ENCODE measurements at regions of chr5 and their contacts with region 1.

Region 1: GRCh38 chr5:140362860-140363630 is 3.1 kb downstream of the SLC4A9 start:
- DNase-seq: peak; percentile 73 to 78
- ATAC-seq: peak; percentile 46 to 81 (median 70)
- H3K4me3 ChIP-seq: peak overlapping the region in 7 of 10 donors; percentile 10 to 40 (median 31)
- H3K27ac ChIP-seq: no peak overlapping the region
- H3K4me1 ChIP-seq: peaks cover 0 to 13% (median 6%) of the 10 kb centered on the region in 9 donors
- H3K27me3 ChIP-seq: no peaks in the 10 kb centered on the region
- CTCF ChIP-seq: peak; percentile 89 to 98 (median 94)

Region 2: DNA sequence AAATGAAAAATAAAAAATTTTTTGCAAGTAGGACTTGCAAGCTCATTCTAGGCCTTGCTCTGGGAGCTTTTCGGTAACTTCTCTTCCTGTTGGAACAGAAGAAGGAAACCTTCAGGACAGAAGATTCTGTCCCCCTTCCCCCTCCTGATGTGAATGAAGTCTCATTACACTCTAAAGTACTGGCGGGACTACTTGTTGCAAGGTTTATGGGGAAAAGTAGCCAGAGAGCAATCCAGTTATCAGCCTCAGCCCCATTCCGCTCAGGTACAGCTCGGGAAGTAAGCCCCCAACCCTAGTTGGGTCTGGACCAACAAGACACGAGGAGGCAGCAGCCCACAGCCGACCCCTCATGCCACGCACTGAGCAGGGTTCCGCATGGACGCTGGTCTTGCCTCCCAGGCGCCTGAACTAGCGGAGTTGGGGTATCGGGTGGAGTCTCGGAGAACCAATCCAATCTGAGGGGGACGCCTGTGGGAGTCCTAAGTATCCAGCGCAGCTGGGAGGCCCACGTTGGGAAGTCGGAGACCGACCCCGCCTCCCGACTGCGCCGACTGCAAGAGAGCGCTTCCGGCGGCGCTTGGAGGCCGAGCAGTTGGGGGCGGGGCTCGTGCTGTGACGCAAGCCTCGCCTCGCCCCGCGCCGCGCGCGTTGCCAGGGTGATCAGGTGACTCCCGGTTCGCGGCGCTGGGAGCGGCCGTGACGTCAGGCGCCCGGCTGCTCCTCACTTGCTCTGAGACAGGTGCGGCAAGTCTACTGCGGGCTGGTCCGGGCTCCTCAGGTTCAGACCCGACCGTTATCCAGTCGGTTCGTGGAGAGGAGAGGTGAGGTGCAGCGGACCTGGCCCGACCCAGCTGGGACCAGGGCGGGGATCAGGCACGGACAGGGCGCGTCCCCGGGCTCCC is 188.3 kb before region 1 on chr5 and contains the start of gene CYSTM1:
- intact Hi-C with region 1: loop called in 2 of 10 experiments (anchors 5 to 10 kb)
- DNase-seq: peak; percentile 96
- ATAC-seq: peak; percentile 94 to 97 (median 95)
- H3K4me3 ChIP-seq: peak within 1 kb of the TSS; percentile 56 to 98 (median 88)
- H3K27ac ChIP-seq: peak within 1 kb of the TSS; percentile 81 to 99 (median 97)
- H3K4me1 ChIP-seq: peaks cover 0 to 44% (median 40%) of the 10 kb centered on the region in 9 donors
- H3K27me3 ChIP-seq: no peaks in the 10 kb centered on the region
- CTCF ChIP-seq: peak in 1 of 9 donors; percentile 6
- total RNA-seq, gene CYSTM1: 55.2 to 114 (median 95.3) TPM

Region 3: GRCh38 chr5:140639148-140639979 is 276.3 kb after region 1 on chr5 and contains the start of gene TMCO6:
- intact Hi-C with region 1: loop called in 3 of 10 experiments (anchors 10 kb)
- DNase-seq: peak; percentile 98 to 99
- ATAC-seq: peak; percentile 98 to 99 (median 99)
- H3K4me3 ChIP-seq: peak within 1 kb of the TSS; percentile 53 to 90 (median 70)
- H3K27ac ChIP-seq: peak within 1 kb of the TSS; percentile 64 to 97 (median 88)
- H3K4me1 ChIP-seq: peaks cover 0 to 44% (median 16%) of the 10 kb centered on the region in 9 donors
- H3K27me3 ChIP-seq: no peaks in the 10 kb centered on the region
- CTCF ChIP-seq: peak; percentile 41 to 89 (median 75)
- total RNA-seq, gene TMCO6: 1.6 to 5.2 (median 3.2) TPM

Region 4: DNA sequence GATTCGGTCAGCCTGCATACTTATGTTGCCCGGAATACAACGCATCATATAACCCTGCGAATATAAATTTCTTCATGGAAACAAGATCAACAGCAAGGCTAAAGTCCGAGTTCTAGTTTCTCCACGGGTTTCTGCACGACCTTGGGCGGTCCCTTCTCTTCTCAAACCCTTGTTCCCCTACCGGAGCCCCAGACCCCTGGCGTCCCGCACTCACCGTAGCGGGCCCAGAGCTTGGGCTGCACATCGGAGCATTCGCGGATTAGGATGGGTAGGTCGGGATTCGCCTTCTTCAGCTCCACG is 283.9 kb after region 1 on chr5:
- intact Hi-C with region 1: loop called in 1 of 10 experiments (anchors 10 kb)
- DNase-seq: no peak
- ATAC-seq: peak in 2 of 8 donors; percentile 3 to 5
- H3K4me3 ChIP-seq: peak overlapping the region; percentile 53 to 99 (median 90)
- H3K27ac ChIP-seq: peak overlapping the region; percentile 54 to 92 (median 86)
- H3K4me1 ChIP-seq: peaks cover 4 to 46% (median 26%) of the 10 kb centered on the region in 9 donors
- H3K27me3 ChIP-seq: no peaks in the 10 kb centered on the region
- CTCF ChIP-seq: no peak

Region 5: DNA sequence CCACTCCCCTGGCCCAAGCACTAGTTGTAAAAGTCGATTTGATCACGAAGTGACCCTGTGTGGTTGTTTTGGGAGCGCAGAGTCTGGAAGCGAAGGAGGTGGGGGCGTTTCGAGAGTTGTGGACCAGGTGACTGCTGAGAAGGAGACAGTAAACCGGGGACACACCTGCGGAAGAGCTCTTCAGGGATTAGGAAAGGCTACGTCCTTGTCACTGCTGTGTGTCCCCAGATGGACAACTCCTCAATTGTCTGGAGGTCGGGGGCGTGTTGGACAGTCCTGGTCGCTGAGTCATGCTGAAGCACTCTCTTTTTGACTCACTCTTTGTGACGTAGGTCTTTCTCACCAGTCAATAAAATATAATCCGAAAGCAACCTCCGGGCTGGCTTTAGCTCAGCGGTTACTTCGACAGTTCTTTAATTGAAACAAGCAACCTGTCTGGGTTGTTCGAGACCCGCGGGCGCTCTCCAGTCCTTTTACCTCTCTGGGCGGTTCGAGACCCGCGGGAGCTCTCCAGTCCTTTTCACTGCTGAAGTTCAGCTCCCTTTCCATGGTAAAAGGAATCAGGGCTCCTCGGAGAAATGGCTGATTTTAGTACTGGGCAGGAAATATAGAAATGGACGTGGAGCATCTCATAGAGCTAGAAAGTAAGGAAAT is 348.0 kb after region 1 on chr5:
- intact Hi-C with region 1: loop called in 3 of 10 experiments (anchors 5 to 10 kb)
- DNase-seq: peak; percentile 82 to 88
- ATAC-seq: peak; percentile 91 to 98 (median 97)
- H3K4me3 ChIP-seq: peak overlapping the region; percentile 31 to 77 (median 66)
- H3K27ac ChIP-seq: peak overlapping the region in 9 of 10 donors; percentile 72 to 95 (median 83)
- H3K4me1 ChIP-seq: peaks cover 0 to 20% (median 4%) of the 10 kb centered on the region in 9 donors
- H3K27me3 ChIP-seq: no peaks in the 10 kb centered on the region
- CTCF ChIP-seq: no peak

Region 6: GRCh38 chr5:140718241-140718580 is 355.2 kb after region 1 on chr5:
- intact Hi-C with region 1: loop called in 3 of 10 experiments (anchors 5 to 10 kb)
- DNase-seq: no peak
- ATAC-seq: no peak
- H3K4me3 ChIP-seq: peak overlapping the region in 2 of 10 donors; percentile 8 to 39
- H3K27ac ChIP-seq: peak overlapping the region in 1 of 10 donors; percentile 45
- H3K4me1 ChIP-seq: peaks cover 0 to 7% (median 0%) of the 10 kb centered on the region in 9 donors
- H3K27me3 ChIP-seq: peaks cover 0 to 16% (median 0%) of the 10 kb centered on the region in 7 donors
- CTCF ChIP-seq: no peak

Region 7: GRCh38 chr5:140734354-140734753 is 371.3 kb after region 1 on chr5:
- intact Hi-C with region 1: loop called in 1 of 10 experiments (anchors 10 kb)
- DNase-seq: no peak
- ATAC-seq: peak in 1 of 8 donors; percentile 80
- H3K4me3 ChIP-seq: no peak overlapping the region
- H3K27ac ChIP-seq: no peak overlapping the region
- H3K4me1 ChIP-seq: no peaks in the 10 kb centered on the region
- H3K27me3 ChIP-seq: peaks cover 0 to 77% (median 36%) of the 10 kb centered on the region in 7 donors
- CTCF ChIP-seq: peak in 7 of 9 donors; percentile 26 to 70 (median 46)